Motor neuron (in vitro differentiated cells): ENCODE measurements at regions of chr3 and their contacts with region 1.

Region 1: DNA sequence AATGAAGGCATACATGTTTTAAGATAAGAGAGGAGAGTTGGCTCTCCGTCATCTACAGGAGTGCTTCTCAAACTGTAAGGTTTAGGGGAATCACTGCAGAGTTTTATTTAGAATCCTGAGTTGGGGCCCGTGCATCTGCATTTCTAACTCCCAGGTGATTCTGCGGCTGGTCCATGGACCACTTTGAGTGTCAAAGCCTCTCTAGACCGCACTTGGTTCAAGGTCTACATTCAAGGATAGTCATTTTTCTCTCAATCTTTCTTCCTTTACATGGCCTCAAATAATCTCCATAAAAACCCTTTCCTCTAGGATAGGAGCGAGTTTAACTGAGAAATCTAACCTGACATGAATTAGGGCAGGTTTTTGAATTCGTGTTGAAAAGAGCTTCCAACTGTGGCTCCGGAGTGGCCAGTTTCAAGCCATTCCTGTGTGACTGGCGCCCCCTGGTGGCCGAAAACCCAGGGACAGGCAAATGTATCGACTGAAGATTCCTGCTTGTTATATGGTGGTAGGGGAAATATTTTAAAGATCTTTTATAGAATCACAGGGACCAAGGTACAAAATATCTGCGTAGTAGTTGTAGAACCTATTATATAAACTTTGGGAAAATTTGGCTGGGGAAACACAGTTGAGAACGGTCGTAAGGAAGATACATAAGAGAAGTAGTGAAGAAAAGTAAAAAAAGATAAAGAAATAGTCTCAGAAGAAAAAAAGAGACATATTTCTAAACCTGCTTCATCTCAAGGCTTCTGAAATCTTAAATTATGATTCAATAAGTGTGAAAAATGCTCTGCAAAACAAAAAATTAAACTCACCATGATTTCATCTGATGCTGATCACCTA is 11.9 kb downstream of the GABRR3 start:
- ATAC-seq: peak; percentile 71 to 91 (median 82)
- H3K4me3 ChIP-seq: no peak overlapping the region
- H3K27ac ChIP-seq: no peak overlapping the region
- H3K4me1 ChIP-seq: peaks cover 0 to 10% of the 10 kb centered on the region in 2 donors

Region 2: GRCh38 chr3:97793420-97794019 is 229.7 kb before region 1 on chr3:
- in situ Hi-C with region 1: loop called (anchors 10 to 25 kb)
- ATAC-seq: peak in 2 of 8 experiments; percentile 37 to 43
- H3K4me3 ChIP-seq: no peak overlapping the region
- H3K27ac ChIP-seq: no peak overlapping the region
- H3K4me1 ChIP-seq: no peaks in the 10 kb centered on the region